ENCODE measurements at regions of chr7 and their contacts with region 1.

Region 1: GRCh38 chr7:149422129-149422913 is 38.5 kb downstream of the ZNF777 start:
- DNase-seq: peak; percentile 79
- ATAC-seq: peak; percentile 98
- H3K4me3 Mint-ChIP-seq: peak overlapping the region; percentile 84
- H3K27ac Mint-ChIP-seq: peak overlapping the region; percentile 74
- H3K4me1 Mint-ChIP-seq: peaks cover 8% of the 10 kb centered on the region
- H3K27me3 Mint-ChIP-seq: no peaks in the 10 kb centered on the region
- CTCF ChIP-seq: no peak

Region 2: GRCh38 chr7:149195180-149196150 is 226.9 kb before region 1 on chr7 and contains the start of gene ZNF282:
- CTCF ChIA-PET with region 1: interaction called, 5 read pairs
- POLR2A ChIA-PET with region 1: interaction called, 8 read pairs
- intact Hi-C with region 1: loop called (anchors 5 kb)
- DNase-seq: peak; percentile 68
- ATAC-seq: peak; percentile 88
- H3K4me3 Mint-ChIP-seq: peak within 1 kb of the TSS; percentile 89
- H3K27ac Mint-ChIP-seq: peak within 1 kb of the TSS; percentile 66
- H3K4me1 Mint-ChIP-seq: peaks cover 31% of the 10 kb centered on the region
- H3K27me3 Mint-ChIP-seq: no peaks in the 10 kb centered on the region
- CTCF ChIP-seq: no peak
- total RNA-seq, gene ZNF282: 21.6 and 21.7 TPM in 2 replicates

Region 3: DNA sequence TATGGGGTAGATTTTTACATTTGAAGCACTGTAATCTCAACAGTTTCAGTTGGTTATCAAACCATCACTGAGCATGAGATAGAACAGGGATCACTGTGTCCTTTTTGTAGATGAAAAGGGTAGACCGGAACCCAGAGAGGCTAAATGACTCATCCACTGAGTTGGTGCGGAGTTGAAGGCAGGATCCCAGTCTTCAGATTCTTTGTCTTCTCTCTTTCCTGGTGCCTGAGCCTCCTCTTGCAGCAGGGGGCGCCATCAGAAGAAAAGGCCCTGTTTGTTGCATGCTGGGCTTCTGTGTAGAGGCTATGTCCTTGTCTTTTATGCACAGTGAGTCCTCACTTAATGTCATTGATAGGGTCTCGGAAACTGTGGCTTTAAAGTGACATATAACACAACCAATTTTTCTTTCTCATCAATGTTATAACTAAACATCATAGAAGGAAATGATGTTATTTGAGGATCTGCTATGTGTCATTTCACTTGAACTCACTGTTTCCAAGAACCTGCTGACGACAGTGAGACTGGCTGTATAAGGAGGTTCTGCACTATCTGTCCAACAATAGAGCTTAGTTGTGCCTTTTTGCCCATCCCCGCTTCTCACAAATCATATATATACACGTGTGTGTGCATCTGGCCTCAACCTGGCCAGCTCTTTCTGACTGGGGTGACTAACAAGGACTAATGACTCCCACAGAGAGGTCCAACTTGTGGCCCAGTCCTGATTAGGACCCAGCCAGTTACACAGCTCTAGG is 212.6 kb before region 1 on chr7:
- CTCF ChIA-PET with region 1: no interaction called
- POLR2A ChIA-PET with region 1: no interaction called
- intact Hi-C with region 1: no loop called
- DNase-seq: no peak
- ATAC-seq: peak; percentile 42
- H3K4me3 Mint-ChIP-seq: no peak overlapping the region
- H3K27ac Mint-ChIP-seq: no peak overlapping the region
- H3K4me1 Mint-ChIP-seq: no peaks in the 10 kb centered on the region
- H3K27me3 Mint-ChIP-seq: no peaks in the 10 kb centered on the region
- CTCF ChIP-seq: no peak

Region 4: DNA sequence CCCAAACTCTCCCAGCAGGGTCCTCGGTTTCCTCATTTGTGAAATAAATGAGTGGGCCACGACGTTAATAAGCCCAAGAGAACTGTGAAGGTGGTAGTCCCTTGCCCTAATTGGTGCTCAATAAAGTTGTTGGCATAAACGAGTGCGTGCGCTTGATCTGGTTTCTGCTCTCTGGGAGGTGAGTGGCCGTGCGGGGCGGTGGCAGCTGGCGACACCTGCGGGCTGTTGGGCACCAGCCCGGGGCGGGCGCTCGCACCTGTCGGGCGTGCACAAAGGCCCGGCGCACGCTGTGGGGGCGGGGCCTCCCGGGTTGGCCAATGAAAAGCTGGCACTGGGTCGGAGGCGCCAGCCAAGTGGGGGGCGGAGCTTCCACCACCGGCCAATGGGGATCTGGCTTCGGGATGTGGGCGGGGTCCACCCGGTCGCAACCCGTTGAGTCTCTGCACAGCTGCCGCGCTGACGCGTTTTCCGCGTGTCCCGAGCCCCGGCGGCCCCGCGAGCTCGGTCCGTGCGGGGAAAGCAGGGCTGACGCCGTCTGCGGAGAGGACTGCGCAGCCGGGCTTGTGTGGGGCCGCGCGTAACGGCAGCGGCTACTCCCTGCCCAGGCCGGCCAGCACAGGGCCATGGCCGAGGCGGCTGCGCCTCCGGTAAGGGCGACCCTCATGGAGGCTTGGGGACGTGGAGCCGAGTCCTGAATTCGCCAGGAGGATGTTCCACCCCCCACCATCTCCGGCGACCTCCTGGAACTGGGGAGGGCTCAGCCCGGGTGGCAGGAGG is 137.3 kb before region 1 on chr7:
- CTCF ChIA-PET with region 1: no interaction called
- POLR2A ChIA-PET with region 1: interaction called, 3 read pairs
- intact Hi-C with region 1: loop called (anchors 1 kb)
- DNase-seq: peak; percentile 95
- ATAC-seq: peak; percentile 99
- H3K4me3 Mint-ChIP-seq: peak overlapping the region; percentile 89
- H3K27ac Mint-ChIP-seq: no peak overlapping the region
- H3K4me1 Mint-ChIP-seq: peaks cover 27% of the 10 kb centered on the region
- H3K27me3 Mint-ChIP-seq: no peaks in the 10 kb centered on the region
- CTCF ChIP-seq: no peak

Region 5: GRCh38 chr7:149497456-149498261 is 75.3 kb after region 1 on chr7 and contains the start of gene ZNF746:
- CTCF ChIA-PET with region 1: interaction called, 4 read pairs
- POLR2A ChIA-PET with region 1: interaction called, 3 read pairs
- intact Hi-C with region 1: loop called (anchors 1 kb)
- DNase-seq: peak; percentile 79
- ATAC-seq: peak; percentile 96
- H3K4me3 Mint-ChIP-seq: peak within 1 kb of the TSS; percentile 92
- H3K27ac Mint-ChIP-seq: peak within 1 kb of the TSS; percentile 82
- H3K4me1 Mint-ChIP-seq: peaks cover 24% of the 10 kb centered on the region
- H3K27me3 Mint-ChIP-seq: peaks cover 2% of the 10 kb centered on the region
- CTCF ChIP-seq: no peak
- total RNA-seq, gene ZNF746: 21.0 and 28.4 TPM in 2 replicates

Region 6: DNA sequence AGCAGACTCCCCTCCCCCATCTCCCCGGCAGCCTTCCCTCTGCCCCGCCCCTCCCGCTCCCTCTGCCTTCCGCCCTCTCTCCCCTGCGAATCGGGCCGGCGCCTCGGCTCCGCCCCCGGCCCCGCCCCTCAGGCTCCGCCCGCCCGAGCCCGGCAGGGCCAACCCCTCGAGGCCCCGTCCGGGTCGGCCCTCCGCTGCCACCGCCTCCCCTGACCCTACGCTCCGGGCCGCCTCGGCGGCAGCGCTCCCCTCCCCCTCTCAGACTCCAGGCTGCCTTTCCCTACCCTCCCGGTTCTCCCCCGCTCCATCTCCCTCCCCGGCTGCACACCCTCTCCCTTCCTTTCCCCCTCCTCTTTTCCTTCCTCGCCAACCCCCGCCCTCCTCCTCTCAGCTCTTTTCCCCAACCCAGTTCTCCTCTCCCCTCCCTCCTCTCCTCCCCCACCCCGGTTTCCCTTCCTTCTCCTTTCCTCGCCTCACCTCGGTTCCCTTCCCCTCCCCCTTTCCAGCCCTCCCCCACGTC is 349.5 kb after region 1 on chr7:
- CTCF ChIA-PET with region 1: no interaction called
- POLR2A ChIA-PET with region 1: no interaction called
- intact Hi-C with region 1: loop called (anchors 10 kb)
- DNase-seq: peak; percentile 84
- ATAC-seq: peak; percentile 97
- H3K4me3 Mint-ChIP-seq: peak overlapping the region; percentile 80
- H3K27ac Mint-ChIP-seq: no peak overlapping the region
- H3K4me1 Mint-ChIP-seq: no peaks in the 10 kb centered on the region
- H3K27me3 Mint-ChIP-seq: peaks cover 8% of the 10 kb centered on the region
- CTCF ChIP-seq: no peak